Mammary epithelial cell (primary cell): ENCODE measurements at regions of chr6 and their contacts with region 1.

Region 1: GRCh38 chr6:146389740-146390139 is 153.9 kb upstream of the RAB32 start:
- DNase-seq: no peak
- H3K4me3 ChIP-seq: no peak overlapping the region
- H3K27ac ChIP-seq: no peak overlapping the region
- H3K4me1 ChIP-seq: no peaks in the 10 kb centered on the region
- H3K27me3 ChIP-seq: peaks cover 2% of the 10 kb centered on the region
- CTCF ChIP-seq: no peak

Region 2: GRCh38 chr6:146345598-146345997 is 44.1 kb before region 1 on chr6:
- CTCF ChIA-PET with region 1: no interaction called
- dilution Hi-C with region 1: loop called (anchors 5 kb)
- in situ Hi-C with region 1: no loop called
- intact Hi-C with region 1: no loop called
- DNase-seq: no peak
- H3K4me3 ChIP-seq: no peak overlapping the region
- H3K27ac ChIP-seq: no peak overlapping the region
- H3K4me1 ChIP-seq: no peaks in the 10 kb centered on the region
- H3K27me3 ChIP-seq: no peaks in the 10 kb centered on the region
- CTCF ChIP-seq: no peak